Activated CD4-positive, alpha-beta T cell treated with anti-CD3 and anti-CD28 coated beads, Interleukin-2, amount 10 ng/mL, durations not matched to agents 24 days and 14 days (primary cell): ENCODE measurements at regions of chr2 and their contacts with region 1.

Region 1: GRCh38 chr2:197804049-197804757 is at the start of gene PLCL1:
- DNase-seq: peak; percentile 97
- H3K4me3 Mint-ChIP-seq: peak within 1 kb of the TSS; percentile 92
- H3K27ac Mint-ChIP-seq: peak within 1 kb of the TSS; percentile 45
- H3K4me1 Mint-ChIP-seq: peaks cover 27% of the 10 kb centered on the region
- H3K27me3 Mint-ChIP-seq: peaks cover 40% of the 10 kb centered on the region
- total RNA-seq, gene PLCL1: 0.45 and 0.63 TPM in 2 replicates

Region 2: GRCh38 chr2:197675711-197676188 is 128.5 kb before region 1 on chr2:
- intact Hi-C with region 1: no loop called
- DNase-seq: no peak
- H3K4me3 Mint-ChIP-seq: no peak overlapping the region
- H3K27ac Mint-ChIP-seq: no peak overlapping the region
- H3K4me1 Mint-ChIP-seq: no peaks in the 10 kb centered on the region
- H3K27me3 Mint-ChIP-seq: peaks cover 23% of the 10 kb centered on the region

Region 3: DNA sequence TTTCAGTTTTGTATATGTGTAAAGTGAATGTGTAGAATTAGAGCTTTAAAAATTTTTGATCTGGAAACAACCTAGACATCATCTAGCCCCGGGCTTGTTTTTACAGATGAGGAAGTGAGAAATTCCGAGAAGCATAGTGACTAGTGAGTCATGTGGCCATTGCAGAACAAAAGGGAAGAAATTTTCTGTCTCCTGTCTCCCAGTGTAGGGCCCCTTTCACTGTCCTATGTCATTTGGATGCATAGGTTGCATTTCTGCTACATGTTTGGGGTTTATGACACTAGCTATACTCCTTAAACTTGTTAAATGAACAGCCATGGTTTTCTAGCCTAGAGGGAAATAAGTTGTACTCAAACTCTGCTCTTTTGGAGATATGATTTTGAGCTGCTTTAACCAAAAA is 84.8 kb after region 1 on chr2:
- intact Hi-C with region 1: loop called (anchors 1 kb)
- DNase-seq: peak; percentile 84
- H3K4me3 Mint-ChIP-seq: peak overlapping the region; percentile 64
- H3K27ac Mint-ChIP-seq: peak overlapping the region; percentile 76
- H3K4me1 Mint-ChIP-seq: peaks cover 41% of the 10 kb centered on the region
- H3K27me3 Mint-ChIP-seq: no peaks in the 10 kb centered on the region

Region 4: DNA sequence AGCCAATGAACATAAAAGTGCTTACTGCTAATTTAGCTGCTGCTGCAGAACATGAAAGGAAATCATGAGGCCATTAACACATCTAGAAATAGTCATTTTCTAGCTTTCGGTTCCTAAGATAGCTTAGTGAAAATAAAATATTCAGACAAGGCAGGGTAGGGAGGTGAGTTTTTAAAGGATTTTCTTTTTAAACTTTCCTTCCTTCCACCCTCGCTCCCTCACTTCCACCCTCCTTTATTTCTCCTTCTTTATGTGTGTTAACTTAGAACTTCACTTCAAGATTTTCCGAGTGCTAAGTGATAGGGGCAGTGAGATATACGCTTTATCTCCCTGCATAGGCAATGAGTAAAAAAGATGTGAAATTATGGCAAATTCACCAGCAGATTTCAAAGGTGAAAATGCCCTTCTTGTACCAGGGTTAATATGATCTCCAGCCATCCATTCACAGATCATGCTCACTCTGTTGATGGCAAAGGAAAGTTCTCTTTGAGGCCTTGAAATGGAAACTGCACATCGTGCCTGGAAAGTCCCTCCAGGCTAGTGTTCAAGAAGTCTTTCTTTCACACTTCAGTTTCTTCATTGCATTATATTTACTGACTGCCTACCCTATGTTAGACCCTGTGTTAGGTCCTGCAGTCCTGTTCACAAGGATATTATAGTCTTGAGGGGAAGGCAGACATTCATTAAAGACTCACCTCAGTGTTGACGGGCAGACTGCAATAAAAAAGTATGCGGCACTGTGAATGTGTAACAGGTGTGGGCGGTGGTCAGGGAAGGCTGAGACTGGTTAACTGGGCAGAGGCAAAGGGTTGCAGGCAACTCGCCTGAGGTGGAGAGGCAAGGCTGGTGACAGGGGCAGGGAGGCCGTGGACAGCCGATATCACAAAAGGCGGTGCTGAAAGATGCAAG is 201.0 kb after region 1 on chr2:
- intact Hi-C with region 1: loop called (anchors 5 kb)
- DNase-seq: peak; percentile 79
- H3K4me3 Mint-ChIP-seq: peak overlapping the region; percentile 66
- H3K27ac Mint-ChIP-seq: peak overlapping the region; percentile 83
- H3K4me1 Mint-ChIP-seq: peaks cover 31% of the 10 kb centered on the region
- H3K27me3 Mint-ChIP-seq: no peaks in the 10 kb centered on the region

Region 5: DNA sequence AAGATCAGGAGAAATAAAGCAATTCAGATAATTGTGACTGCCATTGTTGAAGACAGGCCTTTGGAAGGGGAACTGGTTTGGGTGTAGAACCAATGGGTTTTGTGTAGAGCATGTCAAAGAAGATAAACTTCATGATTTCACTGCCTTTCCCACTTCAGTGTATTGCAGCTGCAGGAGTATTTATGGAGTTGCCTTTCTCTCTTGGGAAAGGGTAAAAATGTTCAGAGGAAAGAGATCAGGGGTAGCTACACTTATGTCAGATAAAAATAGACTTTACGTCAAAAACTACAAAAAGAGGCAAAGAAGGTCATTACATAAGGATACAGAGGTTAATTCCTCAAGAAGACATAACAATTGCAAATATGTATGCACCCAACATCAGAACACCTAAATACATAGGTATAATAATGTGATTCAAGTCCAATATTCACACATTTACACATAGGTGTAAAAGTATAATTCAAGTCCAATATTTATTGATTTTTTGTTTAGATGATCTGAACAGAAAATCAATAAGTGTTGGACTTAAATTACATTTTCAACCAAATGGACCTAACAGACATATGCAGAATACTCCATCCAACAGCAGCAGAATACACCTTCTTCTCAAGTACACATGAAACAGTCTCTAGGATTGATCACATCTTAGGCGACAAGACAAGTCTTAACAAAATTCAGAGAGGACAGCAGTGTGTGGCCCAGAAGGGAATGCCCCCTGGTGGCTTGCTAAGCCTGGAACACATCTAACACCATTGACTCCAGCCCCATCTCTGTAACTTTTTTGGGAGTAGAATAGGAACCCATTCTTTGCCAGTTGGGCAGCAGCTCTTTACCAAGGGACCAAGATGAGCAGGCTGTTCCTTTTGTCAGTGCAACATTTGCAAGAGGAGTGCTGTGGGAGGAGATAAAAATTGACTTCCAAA is 249.8 kb after region 1 on chr2:
- intact Hi-C with region 1: loop called (anchors 1 kb)
- DNase-seq: peak; percentile 78
- H3K4me3 Mint-ChIP-seq: no peak overlapping the region
- H3K27ac Mint-ChIP-seq: no peak overlapping the region
- H3K4me1 Mint-ChIP-seq: peaks cover 2% of the 10 kb centered on the region
- H3K27me3 Mint-ChIP-seq: no peaks in the 10 kb centered on the region

Region 6: GRCh38 chr2:198296665-198297308 is 492.6 kb after region 1 on chr2:
- intact Hi-C with region 1: loop called (anchors 1 kb)
- DNase-seq: peak; percentile 84
- H3K4me3 Mint-ChIP-seq: no peak overlapping the region
- H3K27ac Mint-ChIP-seq: no peak overlapping the region
- H3K4me1 Mint-ChIP-seq: no peaks in the 10 kb centered on the region
- H3K27me3 Mint-ChIP-seq: peaks cover 2% of the 10 kb centered on the region